Activated CD4-positive, alpha-beta memory T cell treated with anti-CD3 and anti-CD28 coated beads for 36 hours (primary cell): ENCODE measurements at regions of chr1 and their contacts with region 1.

Region 1: GRCh38 chr1:53945433-53946251 is at the start of gene IFT25:
- DNase-seq: peak; percentile 99
- H3K4me3 Mint-ChIP-seq: peak within 1 kb of the TSS; percentile 92
- H3K27ac Mint-ChIP-seq: peak within 1 kb of the TSS; percentile 90
- H3K4me1 Mint-ChIP-seq: peaks cover 48% of the 10 kb centered on the region
- H3K27me3 Mint-ChIP-seq: no peaks in the 10 kb centered on the region
- total RNA-seq, gene IFT25: 52.5 to 60.3 TPM

Region 2: DNA sequence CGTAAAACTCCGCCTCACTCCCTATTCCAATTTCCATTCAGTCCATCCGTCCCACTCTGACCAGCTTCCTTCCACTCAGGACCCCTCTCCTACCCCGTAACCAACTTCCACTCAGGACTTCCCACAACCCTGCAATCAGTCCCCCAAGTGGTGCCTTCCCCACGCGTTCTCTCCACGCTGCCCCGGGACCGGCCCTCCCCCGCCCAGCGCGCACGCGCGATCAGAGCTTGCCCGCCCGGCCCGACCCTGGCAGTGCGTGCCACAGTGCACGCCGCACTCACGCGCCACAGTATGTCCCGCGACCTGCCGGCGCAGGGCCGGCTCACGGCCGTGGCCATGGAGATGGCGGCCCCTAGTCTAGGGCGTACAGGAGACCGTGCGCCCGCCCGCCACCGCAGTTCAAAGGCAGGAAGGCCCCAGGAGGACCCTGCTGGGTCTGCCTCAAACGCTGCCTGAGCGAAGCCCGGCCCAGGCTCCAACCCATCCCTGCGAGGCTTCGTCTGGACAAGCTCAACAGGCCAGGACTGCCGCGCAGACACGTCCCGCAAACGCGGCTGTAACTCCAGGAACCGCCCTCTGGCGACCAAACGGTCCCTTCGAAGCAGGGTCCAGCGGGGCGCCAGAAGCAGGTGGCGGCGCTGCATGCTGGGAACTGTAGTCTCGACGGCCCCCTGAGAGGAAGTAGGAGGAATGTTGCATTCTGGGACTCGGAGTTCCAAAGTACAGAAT is 107.6 kb before region 1 on chr1 and contains the start of gene NDC1:
- CTCF ChIA-PET with region 1: interaction called, 3 read pairs
- POLR2A ChIA-PET with region 1: interaction called, 6 read pairs
- intact Hi-C with region 1: loop called (anchors 1 kb)
- DNase-seq: peak; percentile 91
- H3K4me3 Mint-ChIP-seq: peak within 1 kb of the TSS; percentile 90
- H3K27ac Mint-ChIP-seq: peak within 1 kb of the TSS; percentile 96
- H3K4me1 Mint-ChIP-seq: peaks cover 23% of the 10 kb centered on the region
- H3K27me3 Mint-ChIP-seq: peaks cover 2% of the 10 kb centered on the region
- total RNA-seq, gene NDC1: 29.6 to 32.0 TPM

Region 3: DNA sequence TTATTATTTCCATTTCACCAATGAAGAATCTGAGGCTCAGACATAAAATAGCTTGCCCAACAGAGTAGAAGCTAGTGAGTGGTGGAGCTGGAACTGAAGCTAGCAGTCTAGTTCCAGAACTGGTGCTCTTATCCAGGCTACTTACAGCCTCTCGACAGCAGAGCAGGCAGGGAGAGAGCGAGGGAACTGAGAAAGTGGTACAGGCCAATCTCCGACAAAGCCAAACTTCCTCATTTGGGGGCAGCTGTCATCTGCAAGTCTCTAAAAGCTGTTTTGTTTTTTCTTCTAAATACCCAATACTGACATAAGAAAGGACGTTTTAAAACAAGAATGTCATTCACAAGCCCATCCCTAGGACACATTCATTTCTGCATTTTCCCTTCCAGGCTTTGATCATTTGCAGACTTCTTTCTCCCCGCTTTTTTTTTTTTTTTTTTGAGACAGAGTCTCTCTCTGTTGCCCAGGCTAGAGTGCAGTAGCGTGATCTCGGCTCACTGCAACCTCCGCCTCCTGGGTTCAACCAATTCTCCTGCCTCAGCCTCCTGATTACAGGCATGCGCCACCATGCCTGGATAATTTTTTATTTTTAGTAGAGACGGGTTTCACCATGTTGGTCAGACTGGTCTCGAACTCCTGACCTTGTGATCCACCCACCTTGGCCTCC is 76.1 kb before region 1 on chr1:
- CTCF ChIA-PET with region 1: interaction called, 16 read pairs
- POLR2A ChIA-PET with region 1: no interaction called
- intact Hi-C with region 1: no loop called
- DNase-seq: no peak
- H3K4me3 Mint-ChIP-seq: no peak overlapping the region
- H3K27ac Mint-ChIP-seq: no peak overlapping the region
- H3K4me1 Mint-ChIP-seq: no peaks in the 10 kb centered on the region
- H3K27me3 Mint-ChIP-seq: no peaks in the 10 kb centered on the region

Region 4: DNA sequence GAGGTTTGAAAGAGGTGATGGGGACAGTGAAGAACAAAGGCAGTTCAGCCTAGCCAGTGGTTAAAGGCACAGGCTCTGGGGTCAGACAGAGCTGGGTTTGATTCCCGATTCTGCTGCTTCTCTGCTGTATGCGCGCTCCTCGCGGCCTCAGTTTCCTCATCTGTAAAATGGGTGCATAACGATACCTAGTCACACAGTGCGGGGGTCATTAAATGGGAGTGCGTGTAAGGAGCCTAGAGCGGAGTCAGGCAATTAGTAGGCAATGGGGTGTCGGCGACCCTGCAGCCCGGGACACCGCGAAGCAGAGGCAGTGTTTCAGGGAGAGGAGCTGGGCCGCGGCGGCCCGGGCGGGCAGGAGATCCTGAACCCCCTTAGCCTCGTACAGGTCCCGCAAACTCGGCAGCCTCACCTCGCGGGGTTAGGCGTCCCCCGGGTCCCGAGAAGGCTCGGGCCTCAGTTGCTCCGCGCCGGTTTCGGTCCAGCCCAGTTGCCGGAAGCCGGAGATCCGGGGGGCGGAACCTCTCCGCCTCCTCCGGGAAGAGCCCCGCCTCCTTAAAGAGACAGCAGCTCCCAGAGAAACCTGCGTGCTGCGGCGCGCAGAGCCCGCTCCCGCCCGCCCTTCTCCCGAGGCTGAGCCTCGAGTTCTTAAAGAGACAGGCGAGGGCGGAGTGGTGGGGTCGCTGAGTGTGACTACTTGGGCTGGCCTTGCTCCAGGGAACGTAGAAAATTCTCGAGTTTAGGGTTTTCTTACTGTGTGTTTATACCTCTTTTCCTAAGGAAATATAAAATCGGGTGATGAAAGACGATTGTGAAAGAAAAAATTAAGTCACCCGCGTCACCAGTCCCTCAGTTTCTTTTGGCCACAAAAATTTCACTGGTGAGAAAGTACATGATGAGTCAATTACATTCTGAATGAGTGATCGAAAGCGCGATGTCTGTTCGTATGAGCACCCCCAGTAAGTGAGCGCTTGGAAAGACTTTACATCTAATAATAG is 56.0 kb before region 1 on chr1 and contains the start of gene YIPF1:
- CTCF ChIA-PET with region 1: interaction called, 7 read pairs
- POLR2A ChIA-PET with region 1: interaction called, 15 read pairs
- intact Hi-C with region 1: loop called (anchors 1 kb)
- DNase-seq: peak; percentile 93
- H3K4me3 Mint-ChIP-seq: peak within 1 kb of the TSS; percentile 96
- H3K27ac Mint-ChIP-seq: peak within 1 kb of the TSS; percentile 99
- H3K4me1 Mint-ChIP-seq: peaks cover 29% of the 10 kb centered on the region
- H3K27me3 Mint-ChIP-seq: no peaks in the 10 kb centered on the region
- total RNA-seq, gene YIPF1: 17.3 to 19.1 TPM

Region 5: DNA sequence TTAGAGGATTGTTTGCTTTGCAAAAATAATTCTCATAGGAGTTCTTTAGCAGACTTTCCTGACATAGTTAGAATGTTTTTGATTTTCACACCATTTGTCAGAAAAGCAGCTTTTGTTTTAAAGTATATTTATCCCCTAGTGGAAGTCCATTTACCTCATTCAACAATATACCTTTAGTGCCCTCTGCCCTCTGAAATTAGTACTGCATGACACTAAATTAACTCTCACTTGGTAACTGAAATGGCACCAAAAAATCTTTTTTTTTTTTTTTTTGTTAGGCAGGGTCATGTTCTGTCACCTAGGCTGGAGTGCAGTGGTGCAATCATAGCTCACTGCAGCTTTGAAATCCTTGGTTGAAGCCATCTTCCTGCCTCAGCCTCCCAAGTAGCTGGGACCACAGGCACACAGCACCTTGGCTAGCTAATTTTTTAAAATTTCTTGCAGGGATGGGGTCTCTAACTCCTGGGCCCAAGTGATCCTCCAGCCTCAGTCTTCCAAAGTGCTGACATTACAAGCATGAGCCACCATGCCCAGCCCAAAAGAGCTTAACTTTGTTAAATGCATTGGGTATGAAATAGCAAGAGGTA is 14.1 kb after region 1 on chr1:
- CTCF ChIA-PET with region 1: interaction called, 34 read pairs
- POLR2A ChIA-PET with region 1: no interaction called
- intact Hi-C with region 1: no loop called
- DNase-seq: no peak
- H3K4me3 Mint-ChIP-seq: no peak overlapping the region
- H3K27ac Mint-ChIP-seq: no peak overlapping the region
- H3K4me1 Mint-ChIP-seq: peaks cover 8% of the 10 kb centered on the region
- H3K27me3 Mint-ChIP-seq: no peaks in the 10 kb centered on the region